ENCODE measurements at regions of chr6 and their contacts with region 1.

Region 1: GRCh38 chr6:144284783-144285547 is at the start of gene UTRN:
- DNase-seq: peak; percentile 86
- ATAC-seq: peak; percentile 76 to 87
- total RNA-seq, gene UTRN: 79.8 to 86.0 TPM

Region 2: GRCh38 chr6:144104898-144105487 is 180.0 kb before region 1 on chr6:
- intact Hi-C with region 1: loop called in 1 of 2 experiments (anchors 5 kb)
- DNase-seq: no peak
- ATAC-seq: peak; percentile 88

Region 3: GRCh38 chr6:144149891-144150709 is 134.9 kb before region 1 on chr6 and contains the start of gene STX11:
- intact Hi-C with region 1: loop called in 1 of 2 experiments (anchors 10 kb)
- DNase-seq: peak; percentile 80
- ATAC-seq: peak; percentile 94 to 97
- total RNA-seq, gene STX11: 11.3 to 11.4 TPM

Region 4: DNA sequence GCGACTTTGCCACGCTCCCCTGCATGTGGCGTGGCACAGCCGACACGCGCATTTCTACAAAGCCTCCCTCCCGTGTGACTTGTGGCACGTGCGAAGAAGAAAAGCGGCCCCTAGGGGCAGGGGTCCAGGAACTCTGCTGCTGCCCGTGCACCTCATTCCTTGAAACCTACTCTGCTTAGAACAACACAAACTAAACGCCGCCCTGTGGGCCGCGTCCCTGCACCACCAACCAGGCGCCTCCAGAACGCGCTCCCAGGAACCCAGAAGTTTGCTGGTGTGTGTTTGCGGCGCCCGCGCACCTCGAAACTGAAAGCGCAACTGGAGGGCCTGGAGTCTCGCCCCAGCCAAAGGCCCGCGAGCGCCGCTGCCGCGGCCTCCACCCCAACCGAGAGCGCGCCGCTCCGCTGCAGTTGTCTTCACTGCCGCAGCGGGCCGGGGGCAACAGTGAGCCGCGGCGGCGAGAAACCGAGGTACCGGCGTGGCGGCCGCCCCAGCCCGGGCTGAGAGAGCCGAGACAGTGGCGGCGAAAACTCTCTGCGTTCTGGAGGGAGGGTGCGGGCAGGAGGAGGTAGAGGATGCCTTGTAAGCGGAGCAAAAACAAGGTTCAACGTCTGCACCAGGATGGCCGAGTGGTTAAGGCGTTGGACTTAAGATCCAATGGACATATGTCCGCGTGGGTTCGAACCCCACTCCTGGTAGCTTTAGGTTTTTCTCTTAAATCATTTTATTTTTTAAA is 68.9 kb before region 1 on chr6:
- intact Hi-C with region 1: loop called in 1 of 2 experiments (anchors 2 kb)
- DNase-seq: peak; percentile 94
- ATAC-seq: peak; percentile 95

Region 5: DNA sequence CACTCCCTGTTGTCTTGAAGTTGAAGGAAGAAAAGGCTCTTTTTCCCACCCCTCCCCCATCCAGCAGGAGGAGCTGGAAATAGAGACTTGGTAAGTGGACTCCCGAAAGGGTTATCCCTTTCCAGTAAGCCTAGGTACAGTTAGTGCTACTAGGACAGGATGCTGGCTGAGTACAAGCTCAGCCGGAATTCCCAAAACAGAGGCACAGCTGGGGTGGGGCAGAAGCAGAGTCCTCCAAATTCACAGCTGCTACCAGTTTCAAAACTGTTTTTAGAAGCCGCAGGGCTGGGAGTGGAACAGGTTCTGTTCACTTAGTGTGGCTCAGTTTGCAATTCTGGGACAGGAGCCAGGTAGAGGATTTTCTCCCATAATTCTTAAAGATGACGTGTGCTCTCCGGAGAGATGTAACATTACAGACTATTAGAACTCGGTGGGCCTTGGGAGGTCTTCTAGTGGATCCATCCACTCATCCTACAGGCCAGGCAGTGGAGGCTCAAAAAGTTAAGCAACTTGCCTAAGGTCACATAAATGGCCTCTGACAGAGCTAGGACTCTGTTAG is 18.8 kb before region 1 on chr6:
- intact Hi-C with region 1: loop called in 1 of 2 experiments (anchors 2 kb)
- DNase-seq: peak; percentile 70
- ATAC-seq: peak; percentile 75 to 81

Region 6: GRCh38 chr6:144353871-144354314 is 68.9 kb after region 1 on chr6:
- intact Hi-C with region 1: no loop called
- DNase-seq: no peak
- ATAC-seq: peak in 1 of 2 donors; percentile 31

Region 7: GRCh38 chr6:144482142-144482541 is 197.2 kb after region 1 on chr6:
- intact Hi-C with region 1: loop called in 1 of 2 experiments (anchors 5 kb)
- DNase-seq: peak; percentile 81
- ATAC-seq: peak in 1 of 2 donors; percentile 61